Activated CD4-positive, alpha-beta T cell treated with anti-CD3 and anti-CD28 coated beads, Interleukin-2, amount 10 ng/mL, durations not matched to agents 24 days and 14 days (primary cell): ENCODE measurements at regions of chr1 and their contacts with region 1.

Region 1: GRCh38 chr1:100377590-100378361 is 25.5 kb downstream of the CDC14A start:
- DNase-seq: no peak
- H3K4me3 Mint-ChIP-seq: peak overlapping the region; percentile 61
- H3K27ac Mint-ChIP-seq: peak overlapping the region; percentile 88
- H3K4me1 Mint-ChIP-seq: peaks cover 36% of the 10 kb centered on the region
- H3K27me3 Mint-ChIP-seq: no peaks in the 10 kb centered on the region

Region 2: GRCh38 chr1:100452641-100453040 is 74.9 kb after region 1 on chr1:
- intact Hi-C with region 1: loop called (anchors 1 kb)
- DNase-seq: peak; percentile 65
- H3K4me3 Mint-ChIP-seq: peak overlapping the region; percentile 35
- H3K27ac Mint-ChIP-seq: peak overlapping the region; percentile 83
- H3K4me1 Mint-ChIP-seq: peaks cover 63% of the 10 kb centered on the region
- H3K27me3 Mint-ChIP-seq: no peaks in the 10 kb centered on the region